ENCODE measurements at regions of chr3 and their contacts with region 1.

Region 1: DNA sequence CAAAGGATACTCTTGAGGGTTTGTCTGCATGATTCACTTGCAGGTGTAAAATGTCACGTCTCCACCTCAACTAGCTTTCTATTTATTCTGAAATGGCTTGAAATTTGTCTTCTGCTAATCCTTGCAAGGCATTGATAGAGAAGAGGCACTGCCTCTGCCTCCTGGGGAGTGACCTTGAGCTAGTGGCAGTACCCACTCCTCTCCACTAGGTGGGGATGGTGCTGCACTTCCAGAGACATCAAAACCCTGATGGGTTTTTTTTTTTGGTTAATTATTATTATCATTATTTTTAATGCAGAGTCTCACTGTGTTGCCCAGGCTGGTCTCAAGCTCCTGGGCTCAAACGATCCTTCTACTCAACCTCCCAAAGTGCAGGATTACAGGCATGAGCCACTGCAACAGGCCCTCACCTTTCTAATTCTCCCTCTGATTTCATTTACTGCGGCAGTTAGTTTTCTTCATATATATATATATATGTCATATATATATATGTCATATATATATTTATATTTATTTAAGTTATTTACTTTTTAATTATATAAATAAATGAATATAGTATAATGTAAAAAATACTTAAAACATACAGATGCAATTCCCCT is 117.6 kb upstream of the EIF1B start:
- DNase-seq: no peak
- ATAC-seq: peak; percentile 92
- H3K4me3 ChIP-seq: no peak overlapping the region
- H3K27ac ChIP-seq: no peak overlapping the region
- H3K4me1 ChIP-seq: no peaks in the 10 kb centered on the region
- H3K27me3 ChIP-seq: no peaks in the 10 kb centered on the region
- CTCF ChIP-seq: peak; percentile 98

Region 2: GRCh38 chr3:40317061-40317855 is 125.3 kb after region 1 on chr3:
- intact Hi-C with region 1: loop called (anchors 5 kb)
- DNase-seq: no peak
- ATAC-seq: peak; percentile 80
- H3K4me3 ChIP-seq: no peak overlapping the region
- H3K27ac ChIP-seq: no peak overlapping the region
- H3K4me1 ChIP-seq: peaks cover 6% of the 10 kb centered on the region
- H3K27me3 ChIP-seq: no peaks in the 10 kb centered on the region
- CTCF ChIP-seq: peak; percentile 88

Region 3: DNA sequence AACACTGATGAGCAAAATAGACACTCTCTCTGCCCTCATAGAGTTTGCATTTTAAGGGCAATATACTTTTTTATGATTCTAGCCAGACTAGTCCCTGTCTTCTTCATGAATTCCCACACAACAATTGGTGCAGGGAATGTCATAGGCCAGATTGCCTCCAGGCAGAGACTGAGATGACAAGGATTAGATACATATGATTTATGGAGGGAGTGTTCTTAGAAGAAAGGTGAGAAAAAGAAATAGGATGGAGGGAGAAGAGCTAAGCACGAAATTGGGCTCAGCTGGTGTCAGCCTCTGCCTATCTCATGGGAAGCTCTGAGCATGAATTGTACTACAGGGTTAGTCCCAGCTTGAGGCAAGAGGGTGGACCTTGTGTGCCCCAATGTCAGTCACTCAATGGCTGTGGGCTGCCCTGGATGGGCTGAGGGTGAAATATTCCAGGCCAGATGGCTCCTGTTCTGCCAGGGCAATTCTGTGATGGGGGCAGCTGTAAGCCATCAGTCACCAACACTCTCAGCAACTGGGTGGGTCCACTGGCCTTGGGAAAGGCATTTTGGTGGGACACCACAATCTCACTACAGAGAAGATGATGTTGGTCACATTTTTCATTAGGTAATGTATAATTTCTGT is 148.7 kb after region 1 on chr3:
- intact Hi-C with region 1: no loop called
- DNase-seq: no peak
- ATAC-seq: no peak
- H3K4me3 ChIP-seq: no peak overlapping the region
- H3K27ac ChIP-seq: no peak overlapping the region
- H3K4me1 ChIP-seq: no peaks in the 10 kb centered on the region
- H3K27me3 ChIP-seq: no peaks in the 10 kb centered on the region
- CTCF ChIP-seq: no peak

Region 4: DNA sequence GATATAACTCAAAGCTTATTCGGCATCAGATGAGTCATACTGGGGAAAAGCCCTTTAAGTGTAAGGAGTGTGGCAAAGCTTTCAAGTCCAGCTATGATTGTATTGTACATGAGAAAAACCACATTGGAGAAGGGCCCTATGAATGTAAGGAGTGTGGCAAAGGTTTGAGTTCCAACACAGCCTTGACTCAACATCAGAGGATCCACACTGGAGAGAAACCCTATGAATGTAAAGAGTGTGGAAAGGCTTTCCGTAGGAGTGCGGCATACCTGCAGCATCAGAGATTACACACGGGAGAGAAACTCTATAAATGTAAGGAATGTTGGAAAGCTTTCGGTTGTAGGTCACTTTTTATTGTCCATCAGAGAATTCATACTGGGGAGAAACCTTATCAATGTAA is 340.3 kb after region 1 on chr3:
- intact Hi-C with region 1: no loop called
- DNase-seq: no peak
- ATAC-seq: no peak
- H3K4me3 ChIP-seq: no peak overlapping the region
- H3K27ac ChIP-seq: no peak overlapping the region
- H3K4me1 ChIP-seq: no peaks in the 10 kb centered on the region
- H3K27me3 ChIP-seq: no peaks in the 10 kb centered on the region
- CTCF ChIP-seq: no peak

Region 5: GRCh38 chr3:40680685-40681657 is 489.0 kb after region 1 on chr3:
- intact Hi-C with region 1: no loop called
- DNase-seq: no peak
- ATAC-seq: no peak
- H3K4me3 ChIP-seq: no peak overlapping the region
- H3K27ac ChIP-seq: no peak overlapping the region
- H3K4me1 ChIP-seq: no peaks in the 10 kb centered on the region
- H3K27me3 ChIP-seq: no peaks in the 10 kb centered on the region
- CTCF ChIP-seq: no peak